ENCODE measurements at regions of chr10 and their contacts with region 1.

Region 1: DNA sequence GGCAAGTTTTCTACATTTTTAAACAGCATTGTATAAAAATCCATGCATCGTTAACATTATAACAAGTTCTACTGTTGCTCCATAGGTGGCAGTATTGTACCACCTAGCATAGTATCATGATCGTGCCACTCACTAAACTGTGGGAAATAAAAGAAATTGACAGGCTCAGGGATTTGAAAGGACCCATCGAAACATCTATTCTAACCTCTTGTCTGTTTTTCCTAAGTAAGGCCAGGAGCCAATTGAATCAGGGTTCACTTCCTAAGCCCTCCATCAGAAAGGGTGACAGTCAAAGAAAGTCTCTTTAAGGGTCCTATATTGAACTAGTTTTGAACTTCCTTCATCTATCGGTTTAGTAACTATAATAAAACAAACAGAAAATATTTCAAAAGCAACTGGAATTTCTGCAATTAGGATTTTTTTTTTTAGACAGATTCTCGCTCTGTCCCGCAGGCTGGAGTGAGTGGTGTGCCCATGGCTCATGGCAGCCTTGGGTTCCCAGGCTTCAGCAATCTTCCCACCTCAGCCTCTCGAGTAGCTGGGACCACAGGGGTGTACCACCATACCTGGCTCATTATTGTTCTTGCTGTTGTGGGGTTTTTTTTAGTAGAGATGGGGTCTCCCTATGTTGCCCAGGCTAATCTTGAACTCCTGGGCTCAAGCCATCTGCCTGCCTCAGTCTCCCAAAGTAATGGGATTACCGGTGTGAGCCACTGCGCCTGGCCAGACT is 9.4 kb downstream of the HACD1 start:
- DNase-seq: peak in 1 of 4 donors; percentile 29
- ATAC-seq: peak; percentile 85
- H3K4me3 ChIP-seq: no peak overlapping the region
- H3K27ac ChIP-seq: no peak overlapping the region
- H3K4me1 ChIP-seq: no peaks in the 10 kb centered on the region
- H3K27me3 ChIP-seq: no peaks in the 10 kb centered on the region
- CTCF ChIP-seq: peak; percentile 74 to 95 (median 91)
- POLR2A ChIP-seq: no peak

Region 2: GRCh38 chr10:17488848-17489247 is 118.9 kb before region 1 on chr10:
- intact Hi-C with region 1: no loop called
- DNase-seq: no peak
- ATAC-seq: no peak
- H3K4me3 ChIP-seq: no peak overlapping the region
- H3K27ac ChIP-seq: no peak overlapping the region
- H3K4me1 ChIP-seq: no peaks in the 10 kb centered on the region
- H3K27me3 ChIP-seq: no peaks in the 10 kb centered on the region
- CTCF ChIP-seq: no peak
- POLR2A ChIP-seq: no peak

Region 3: DNA sequence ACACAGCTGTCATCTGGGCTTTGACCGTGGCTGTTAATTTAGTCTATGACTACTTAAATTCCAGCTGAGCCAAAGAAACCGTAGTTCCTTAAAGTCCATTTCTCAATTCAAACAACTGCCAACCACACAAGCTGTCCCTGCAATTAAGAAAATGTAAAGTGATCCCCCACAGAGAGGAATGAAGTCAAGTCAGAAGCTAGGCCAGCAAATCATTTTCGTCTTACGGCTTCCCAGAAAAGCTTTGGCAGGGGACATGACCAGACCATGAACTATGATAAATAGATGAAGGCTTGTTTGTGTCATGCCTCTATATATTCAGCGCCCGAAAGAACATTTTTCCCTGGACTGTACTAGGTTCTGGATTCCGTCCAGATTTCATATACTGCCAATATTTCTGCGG is 45.2 kb before region 1 on chr10:
- intact Hi-C with region 1: no loop called
- DNase-seq: no peak
- ATAC-seq: no peak
- H3K4me3 ChIP-seq: no peak overlapping the region
- H3K27ac ChIP-seq: no peak overlapping the region
- H3K4me1 ChIP-seq: no peaks in the 10 kb centered on the region
- H3K27me3 ChIP-seq: no peaks in the 10 kb centered on the region
- CTCF ChIP-seq: no peak
- POLR2A ChIP-seq: no peak

Region 4: DNA sequence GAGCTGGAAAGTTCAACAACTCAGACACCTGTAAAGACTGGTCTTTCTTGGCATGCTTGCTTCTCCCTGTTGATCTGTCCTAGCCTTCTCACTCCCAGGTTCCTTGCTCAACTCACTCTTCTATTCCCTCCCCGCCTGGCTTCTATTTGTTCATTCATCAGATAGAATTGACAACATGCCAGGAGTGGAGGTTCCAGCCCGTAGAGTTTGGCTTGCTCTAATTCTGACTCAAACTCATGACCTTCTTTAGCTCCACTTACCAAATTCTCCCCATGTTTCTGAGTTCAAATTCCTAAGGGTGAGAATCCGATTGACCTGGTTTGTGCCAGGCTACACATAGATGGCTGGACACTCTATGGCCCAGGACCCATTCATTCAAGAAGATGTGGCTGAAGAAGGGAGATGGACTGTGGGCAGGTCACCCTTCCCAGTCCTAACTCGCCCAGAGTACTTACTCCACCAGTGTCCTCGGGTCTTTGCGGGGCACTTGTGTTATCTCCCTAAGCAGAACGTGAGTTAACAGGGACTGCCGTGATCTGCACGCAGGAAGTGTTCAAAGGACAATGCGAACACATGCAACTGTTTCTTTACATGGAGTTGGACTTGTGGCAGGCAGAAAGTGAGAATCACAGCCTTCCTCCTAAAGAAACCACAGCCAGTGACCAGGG is 140.2 kb after region 1 on chr10:
- intact Hi-C with region 1: loop called (anchors 5 kb)
- DNase-seq: peak; percentile 21 to 53 (median 45)
- ATAC-seq: peak; percentile 67
- H3K4me3 ChIP-seq: no peak overlapping the region
- H3K27ac ChIP-seq: no peak overlapping the region
- H3K4me1 ChIP-seq: peaks cover 10% of the 10 kb centered on the region
- H3K27me3 ChIP-seq: no peaks in the 10 kb centered on the region
- CTCF ChIP-seq: no peak
- POLR2A ChIP-seq: no peak

Region 5: GRCh38 chr10:17872191-17873091 is 264.7 kb after region 1 on chr10:
- intact Hi-C with region 1: loop called (anchors 10 kb)
- DNase-seq: peak in 2 of 4 donors; percentile 35 to 44
- ATAC-seq: peak; percentile 47
- H3K4me3 ChIP-seq: no peak overlapping the region
- H3K27ac ChIP-seq: peak overlapping the region in 1 of 4 donors; percentile 27
- H3K4me1 ChIP-seq: no peaks in the 10 kb centered on the region
- H3K27me3 ChIP-seq: no peaks in the 10 kb centered on the region
- CTCF ChIP-seq: peak in 6 of 7 experiments; percentile 21 to 74 (median 66)
- POLR2A ChIP-seq: no peak